Sciatic nerve (tissue), 2 donors: ENCODE measurements at regions of chr2 and their contacts with region 1.

Region 1: GRCh38 chr2:155062250-155062921 is 363.9 kb downstream of the KCNJ3 start:
- DNase-seq: no peak
- ATAC-seq: no peak

Region 2: DNA sequence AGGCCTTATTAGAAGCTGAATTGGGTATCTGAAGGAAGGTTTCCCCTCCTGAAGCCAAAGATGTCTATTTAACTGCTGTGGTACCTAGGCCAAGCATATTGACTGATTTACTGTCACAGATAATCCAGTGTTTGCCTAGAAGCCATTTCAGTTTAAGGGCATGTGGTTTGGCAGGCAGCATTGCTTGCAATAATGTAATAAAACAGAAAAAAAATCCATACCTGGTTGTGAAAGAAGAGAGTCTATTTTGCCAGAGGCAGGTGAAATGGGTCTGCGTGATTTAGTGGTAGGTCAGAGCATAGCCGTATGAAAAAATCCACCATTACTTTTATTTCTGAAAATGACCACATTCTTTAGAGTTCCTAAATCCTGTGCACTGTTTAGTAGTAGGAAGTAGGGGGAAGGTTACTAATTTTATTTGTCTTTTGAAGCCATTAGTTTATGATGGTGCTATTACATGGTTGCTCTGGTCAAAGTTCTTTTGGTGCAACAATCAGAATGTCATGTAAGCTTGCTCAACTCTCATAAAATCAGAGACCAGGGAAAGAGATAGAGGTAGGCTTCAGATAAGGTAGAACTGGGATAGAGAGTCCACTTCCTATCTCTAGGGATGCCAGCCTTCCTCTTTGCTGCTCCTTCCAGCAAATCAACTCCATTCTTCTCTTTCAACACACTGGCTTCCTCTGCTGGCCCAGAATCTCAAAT is 1717.2 kb after region 1 on chr2:
- intact Hi-C with region 1: loop called (anchors 5 kb)
- DNase-seq: no peak
- ATAC-seq: no peak